A549 (cell line): ENCODE measurements at regions of chr11 and their contacts with region 1.

Region 1: DNA sequence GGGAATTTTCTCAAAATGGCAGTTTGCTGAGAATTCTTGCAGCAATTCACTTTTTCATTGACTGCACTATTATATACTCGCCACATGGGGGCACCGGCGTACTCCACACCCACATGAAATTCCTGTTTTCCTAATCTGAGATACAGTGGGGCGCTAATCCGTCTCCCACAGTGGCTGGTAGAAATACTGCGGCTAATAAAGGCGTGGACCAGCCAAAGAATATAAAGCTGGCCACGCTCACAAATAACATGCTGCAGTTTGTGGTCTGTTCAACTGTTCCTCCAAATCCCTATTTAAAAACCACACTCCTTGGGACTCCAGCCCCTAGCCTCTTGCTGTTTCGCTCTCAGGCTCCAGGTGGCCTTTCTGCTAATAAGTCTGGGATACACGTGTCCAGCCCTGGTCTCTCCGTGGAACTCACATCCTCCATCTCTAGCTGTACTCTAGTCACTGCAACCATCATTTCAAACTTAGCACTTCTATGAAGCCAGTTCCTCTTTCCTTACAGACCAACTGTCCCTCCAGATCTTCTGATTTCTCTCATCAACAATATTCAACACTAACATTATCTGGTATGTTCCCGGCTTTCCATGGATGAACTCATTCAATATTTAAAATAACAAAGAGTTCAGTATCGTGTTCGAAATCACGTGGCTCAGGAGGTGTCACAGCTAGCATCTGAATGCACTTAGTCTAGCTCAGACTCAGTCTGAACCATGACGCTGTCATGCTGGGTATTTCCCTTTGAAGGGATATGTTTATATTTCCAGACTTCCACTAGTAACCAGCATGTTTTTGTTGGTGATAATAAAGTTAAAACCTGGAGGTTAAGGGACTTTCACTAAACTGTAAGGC is 22.0 kb downstream of the TBRG1 start:
- DNase-seq: peak; percentile 51 to 68
- ATAC-seq: peak; percentile 95
- H3K4me3 ChIP-seq: no peak overlapping the region
- H3K27ac ChIP-seq: peak overlapping the region; percentile 31 to 42; a peak in 1 of 6 replicates
- H3K4me1 ChIP-seq: no peaks in the 10 kb centered on the region
- CTCF ChIP-seq: peak; percentile 78
- EP300 ChIP-seq: no peak
- POLR2A ChIP-seq: no peak
- RAD21 ChIP-seq: peak; percentile 60 to 77

Region 2: GRCh38 chr11:124633355-124633754 is 11.3 kb before region 1 on chr11:
- CTCF ChIA-PET with region 1: interaction called, 32 read pairs
- POLR2A ChIA-PET with region 1: no interaction called
- DNase-seq: peak; percentile 4 to 26
- ATAC-seq: peak; percentile 86 to 87
- H3K4me3 ChIP-seq: no peak overlapping the region
- H3K27ac ChIP-seq: no peak overlapping the region
- H3K4me1 ChIP-seq: no peaks in the 10 kb centered on the region
- CTCF ChIP-seq: peak; percentile 18; the same call in 1 of the 3 replicates
- EP300 ChIP-seq: no peak
- POLR2A ChIP-seq: no peak
- RAD21 ChIP-seq: no peak

Region 3: DNA sequence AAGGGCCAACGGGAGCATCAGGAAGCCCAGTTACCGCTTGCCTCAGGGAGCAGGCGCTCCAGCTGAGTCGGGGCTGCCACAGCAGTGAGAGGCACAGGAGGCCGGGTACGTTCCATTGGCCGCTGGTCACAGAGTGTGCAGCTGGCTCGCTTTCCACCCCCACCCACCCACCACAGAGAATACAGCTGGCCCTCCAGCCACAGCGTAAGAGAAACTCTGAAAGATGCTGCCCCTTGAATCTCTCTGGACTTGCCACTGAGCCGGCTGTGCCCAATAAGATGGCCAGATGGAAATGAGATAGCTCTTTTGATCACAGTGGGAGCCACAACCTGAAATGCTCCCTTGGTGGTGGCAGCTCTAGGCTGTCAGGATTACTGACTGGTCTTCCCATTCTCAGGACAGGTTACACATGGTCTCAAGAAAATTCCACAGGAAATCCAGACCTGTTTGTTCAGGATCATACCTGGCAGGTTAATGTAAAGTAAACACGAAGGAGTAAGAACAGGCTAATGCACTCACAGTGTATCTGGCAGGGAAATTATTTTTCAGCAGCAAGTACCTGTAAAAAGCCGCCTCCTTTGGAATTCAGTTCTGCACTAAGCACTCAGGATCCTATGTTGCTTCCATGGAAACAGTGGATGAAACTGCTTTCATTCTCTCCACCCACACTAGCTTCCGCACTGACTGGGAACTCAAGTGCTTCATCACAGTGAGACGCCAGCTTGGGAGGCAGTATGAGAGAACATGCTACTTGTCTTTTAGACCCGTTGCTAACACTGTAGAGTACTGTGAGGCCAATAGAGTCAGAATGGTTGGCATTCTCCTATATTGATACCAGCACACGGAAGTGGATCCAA is 12.3 kb after region 1 on chr11:
- CTCF ChIA-PET with region 1: interaction called, 14 read pairs
- POLR2A ChIA-PET with region 1: interaction called, 7 read pairs
- DNase-seq: no peak
- ATAC-seq: no peak
- H3K4me3 ChIP-seq: no peak overlapping the region
- H3K27ac ChIP-seq: no peak overlapping the region
- H3K4me1 ChIP-seq: no peaks in the 10 kb centered on the region
- CTCF ChIP-seq: no peak
- EP300 ChIP-seq: no peak
- POLR2A ChIP-seq: no peak
- RAD21 ChIP-seq: no peak

Region 4: DNA sequence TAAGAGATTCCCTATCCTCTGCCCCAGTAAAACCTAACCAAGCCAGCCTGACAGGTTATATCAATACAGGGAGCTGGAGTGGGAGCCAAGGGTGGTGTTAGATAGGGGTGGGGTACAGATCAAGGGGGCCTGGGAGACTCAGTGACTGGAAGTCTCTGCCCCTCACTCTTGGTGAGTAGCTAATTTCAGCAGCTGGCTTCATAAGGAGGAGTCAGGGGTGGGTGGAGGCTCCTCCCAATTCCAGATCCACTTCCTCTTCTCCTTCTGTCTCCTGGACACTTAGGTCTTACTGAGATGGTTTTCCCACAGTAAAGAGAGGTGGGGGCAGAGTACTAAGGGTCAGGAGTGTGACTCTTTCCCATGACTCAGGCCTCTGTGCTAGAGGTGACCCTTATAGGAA is 108.6 kb after region 1 on chr11:
- CTCF ChIA-PET with region 1: interaction called, 10 read pairs
- POLR2A ChIA-PET with region 1: no interaction called
- DNase-seq: no peak
- ATAC-seq: no peak
- H3K4me3 ChIP-seq: no peak overlapping the region
- H3K27ac ChIP-seq: no peak overlapping the region
- H3K4me1 ChIP-seq: peaks cover 4% of the 10 kb centered on the region; the same call in 2 of the 3 replicates
- CTCF ChIP-seq: no peak
- EP300 ChIP-seq: no peak
- POLR2A ChIP-seq: no peak
- RAD21 ChIP-seq: no peak

Region 5: DNA sequence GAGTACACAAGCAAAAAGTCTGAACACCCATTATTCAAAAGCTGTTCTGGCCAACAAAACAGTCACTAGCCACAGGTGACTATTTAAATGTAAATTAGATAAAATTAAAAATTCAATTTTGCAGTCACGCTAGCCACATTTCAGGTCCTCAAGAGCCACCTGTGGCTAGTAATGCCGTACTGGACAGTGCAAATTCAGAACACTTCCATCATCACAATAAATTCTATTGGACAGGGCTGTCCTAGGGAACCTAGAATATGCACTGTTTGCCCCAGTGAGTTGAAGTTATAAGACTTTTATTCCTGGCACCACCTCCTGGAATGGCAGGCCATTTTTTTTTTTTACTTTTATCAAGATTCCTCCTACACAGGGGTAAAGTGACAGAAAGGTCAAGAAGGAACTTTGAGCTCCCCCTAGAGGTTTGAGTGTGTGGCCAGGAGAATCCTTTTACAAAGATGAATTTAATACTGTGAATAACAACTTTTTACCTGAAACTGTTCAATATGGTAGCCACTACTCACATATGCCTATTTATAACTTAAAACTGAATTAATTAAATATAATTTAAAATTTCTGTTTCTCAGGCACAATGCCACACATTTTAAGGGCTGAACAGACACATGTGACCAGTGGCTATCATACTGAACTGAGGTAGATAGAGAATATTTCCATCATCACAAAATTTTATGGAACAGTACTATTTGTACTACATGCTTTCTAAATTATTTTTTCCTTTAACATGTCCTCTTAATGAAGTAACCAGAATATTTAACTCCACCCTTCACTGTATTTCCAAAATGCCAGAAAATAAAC is 149.0 kb after region 1 on chr11:
- CTCF ChIA-PET with region 1: interaction called, 12 read pairs
- POLR2A ChIA-PET with region 1: interaction called, 3 read pairs
- DNase-seq: peak; percentile 40 to 62
- ATAC-seq: peak; percentile 59 to 88; a peak in 4 of 6 replicates
- H3K4me3 ChIP-seq: no peak overlapping the region
- H3K27ac ChIP-seq: no peak overlapping the region
- H3K4me1 ChIP-seq: peaks cover 31% of the 10 kb centered on the region
- CTCF ChIP-seq: peak; percentile 70
- EP300 ChIP-seq: no peak
- POLR2A ChIP-seq: no peak
- RAD21 ChIP-seq: peak; percentile 65 to 72